ENCODE measurements at regions of chr17 and their contacts with region 1.

Region 1: DNA sequence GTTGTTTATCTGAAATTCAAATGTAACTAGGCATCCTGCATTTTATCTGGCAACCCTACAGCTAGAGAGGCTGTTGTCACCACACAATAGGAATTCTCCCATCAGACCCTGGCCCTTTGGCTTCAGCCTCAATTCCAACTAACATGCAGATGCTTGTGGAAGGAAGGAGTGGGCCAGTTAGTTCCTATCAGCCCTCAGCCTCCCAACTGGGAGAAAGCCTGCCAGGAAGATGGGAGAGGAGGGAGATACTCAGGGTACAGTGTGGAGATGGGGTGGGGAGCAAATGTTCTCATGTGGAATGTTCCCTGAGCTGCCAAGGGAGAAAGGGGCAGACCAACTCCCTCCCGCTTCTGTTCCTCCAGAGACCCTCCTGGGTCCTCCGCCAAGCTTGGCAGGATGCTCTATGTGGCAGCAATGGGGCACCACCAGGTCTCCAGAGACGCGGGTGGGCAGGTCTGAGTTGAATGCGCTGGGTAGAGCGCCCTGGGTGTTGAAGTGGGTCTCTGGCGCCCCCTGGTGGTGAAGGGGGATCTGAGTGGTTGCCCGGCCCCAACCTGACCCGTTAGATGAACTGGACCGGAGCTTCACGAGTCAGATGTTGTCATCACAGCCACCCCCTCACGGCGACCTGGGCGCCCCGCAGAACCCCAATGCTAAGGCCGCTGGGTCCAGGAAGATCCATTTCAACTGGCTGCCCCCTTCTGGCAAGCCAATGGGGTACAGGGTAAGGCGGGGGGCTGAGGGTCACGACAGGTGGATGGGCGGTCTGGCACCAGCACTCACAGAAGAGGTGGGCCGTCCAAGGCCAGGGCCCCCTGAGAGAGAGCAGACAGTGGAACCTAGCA is 15.2 kb downstream of the GALK1 start:
- DNase-seq: peak; percentile 91
- ATAC-seq: peak; percentile 76
- H3K4me3 ChIP-seq: no peak overlapping the region
- H3K4me3 Mint-ChIP-seq: peak overlapping the region; percentile 35
- H3K27ac ChIP-seq: no peak overlapping the region
- H3K27ac Mint-ChIP-seq: peak overlapping the region; percentile 64
- H3K4me1 ChIP-seq: peaks cover 9 to 34% of the 10 kb centered on the region in 2 donors
- H3K4me1 Mint-ChIP-seq: peaks cover 21% of the 10 kb centered on the region
- H3K27me3 ChIP-seq: no peaks in the 10 kb centered on the region
- H3K27me3 Mint-ChIP-seq: peaks cover 4% of the 10 kb centered on the region
- CTCF ChIP-seq: peak; percentile 86

Region 2: GRCh38 chr17:75430159-75430974 is 319.4 kb before region 1 on chr17:
- CTCF ChIA-PET with region 1: interaction called, 17 read pairs
- POLR2A ChIA-PET with region 1: no interaction called
- intact Hi-C with region 1: loop called (anchors 1 kb)
- DNase-seq: no peak
- ATAC-seq: no peak
- H3K4me3 ChIP-seq: no peak overlapping the region
- H3K4me3 Mint-ChIP-seq: no peak overlapping the region
- H3K27ac ChIP-seq: no peak overlapping the region
- H3K27ac Mint-ChIP-seq: no peak overlapping the region
- H3K4me1 ChIP-seq: peaks cover 6 to 7% of the 10 kb centered on the region in 2 donors
- H3K4me1 Mint-ChIP-seq: peaks cover 11% of the 10 kb centered on the region
- H3K27me3 ChIP-seq: peaks cover 0 to 4% (median 0%) of the 10 kb centered on the region in 4 experiments
- H3K27me3 Mint-ChIP-seq: peaks cover 15% of the 10 kb centered on the region
- CTCF ChIP-seq: no peak

Region 3: GRCh38 chr17:75601057-75602051 is 148.4 kb before region 1 on chr17:
- CTCF ChIA-PET with region 1: interaction called, 53 read pairs
- POLR2A ChIA-PET with region 1: interaction called, 3 read pairs
- intact Hi-C with region 1: loop called (anchors 1 kb)
- DNase-seq: peak; percentile 68
- ATAC-seq: peak; percentile 77
- H3K4me3 ChIP-seq: no peak overlapping the region
- H3K4me3 Mint-ChIP-seq: no peak overlapping the region
- H3K27ac ChIP-seq: no peak overlapping the region
- H3K27ac Mint-ChIP-seq: no peak overlapping the region
- H3K4me1 ChIP-seq: no peaks in the 10 kb centered on the region
- H3K4me1 Mint-ChIP-seq: no peaks in the 10 kb centered on the region
- H3K27me3 ChIP-seq: no peaks in the 10 kb centered on the region
- H3K27me3 Mint-ChIP-seq: no peaks in the 10 kb centered on the region
- CTCF ChIP-seq: peak; percentile 76

Region 4: DNA sequence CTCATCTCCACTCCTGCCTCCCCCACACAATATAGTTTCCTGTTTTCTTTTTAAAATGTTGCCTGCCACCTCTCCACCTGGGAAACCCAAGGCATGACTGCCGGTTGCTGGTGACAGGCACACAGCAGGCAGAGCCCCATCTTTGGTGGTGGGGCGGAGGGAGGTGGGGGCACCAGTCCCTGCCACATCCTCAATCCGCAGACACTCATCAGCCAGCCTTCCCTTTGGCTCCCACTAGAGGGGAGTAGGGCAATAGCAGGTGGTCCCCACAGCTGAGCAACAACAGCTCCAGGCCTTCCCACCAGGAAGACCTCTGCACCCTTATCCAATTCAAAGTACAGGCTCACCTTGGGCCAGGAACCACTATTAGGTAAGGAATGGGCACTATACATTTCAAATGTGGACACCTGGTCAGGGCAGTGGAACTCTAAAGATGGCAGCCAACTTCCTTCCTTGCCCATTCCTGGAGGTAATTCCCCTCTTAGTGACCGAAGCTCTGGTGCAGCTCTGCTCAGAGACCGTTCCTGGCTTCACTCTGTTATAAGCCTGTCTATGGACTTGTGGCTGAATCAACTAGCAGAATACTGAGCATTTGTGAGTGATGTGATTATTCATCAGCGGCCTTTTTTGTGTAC is 96.7 kb before region 1 on chr17:
- CTCF ChIA-PET with region 1: interaction called, 12 read pairs
- POLR2A ChIA-PET with region 1: interaction called, 13 read pairs
- intact Hi-C with region 1: no loop called
- DNase-seq: peak; percentile 59
- ATAC-seq: peak; percentile 81
- H3K4me3 ChIP-seq: no peak overlapping the region
- H3K4me3 Mint-ChIP-seq: no peak overlapping the region
- H3K27ac ChIP-seq: no peak overlapping the region
- H3K27ac Mint-ChIP-seq: peak overlapping the region; percentile 20
- H3K4me1 ChIP-seq: peaks cover 6 to 8% of the 10 kb centered on the region in 2 donors
- H3K4me1 Mint-ChIP-seq: peaks cover 7% of the 10 kb centered on the region
- H3K27me3 ChIP-seq: no peaks in the 10 kb centered on the region
- H3K27me3 Mint-ChIP-seq: no peaks in the 10 kb centered on the region
- CTCF ChIP-seq: peak; percentile 73

Region 5: GRCh38 chr17:75720725-75721462 is 28.9 kb before region 1 on chr17 and contains the start of gene ITGB4:
- CTCF ChIA-PET with region 1: interaction called, 15 read pairs
- POLR2A ChIA-PET with region 1: no interaction called
- intact Hi-C with region 1: no loop called
- DNase-seq: peak; percentile 73
- ATAC-seq: peak; percentile 93
- H3K4me3 ChIP-seq: peak within 1 kb of the TSS in 4 of 5 experiments; percentile 28 to 60 (median 50)
- H3K4me3 Mint-ChIP-seq: peak within 1 kb of the TSS; percentile 83
- H3K27ac ChIP-seq: no peak within 1 kb of the TSS
- H3K27ac Mint-ChIP-seq: no peak within 1 kb of the TSS
- H3K4me1 ChIP-seq: peaks cover 5 to 11% of the 10 kb centered on the region in 2 donors
- H3K4me1 Mint-ChIP-seq: peaks cover 7% of the 10 kb centered on the region
- H3K27me3 ChIP-seq: peaks cover 0 to 30% (median 4%) of the 10 kb centered on the region in 4 experiments
- H3K27me3 Mint-ChIP-seq: peaks cover 14% of the 10 kb centered on the region
- CTCF ChIP-seq: no peak
- total RNA-seq, gene ITGB4: 0.81 and 1.1 TPM in 2 replicates

Region 6: GRCh38 chr17:75784473-75785015 is 34.8 kb after region 1 on chr17 and contains the start of gene UNK:
- CTCF ChIA-PET with region 1: interaction called, 41 read pairs
- POLR2A ChIA-PET with region 1: interaction called, 9 read pairs
- intact Hi-C with region 1: no loop called
- DNase-seq: peak; percentile 99
- ATAC-seq: peak; percentile 75
- H3K4me3 ChIP-seq: peak within 1 kb of the TSS; percentile 75 to 83 (median 81)
- H3K4me3 Mint-ChIP-seq: peak within 1 kb of the TSS; percentile 96
- H3K27ac ChIP-seq: peak within 1 kb of the TSS; percentile 100
- H3K27ac Mint-ChIP-seq: peak within 1 kb of the TSS; percentile 100
- H3K4me1 ChIP-seq: peaks cover 42 to 49% of the 10 kb centered on the region in 2 donors
- H3K4me1 Mint-ChIP-seq: peaks cover 53% of the 10 kb centered on the region
- H3K27me3 ChIP-seq: no peaks in the 10 kb centered on the region
- H3K27me3 Mint-ChIP-seq: no peaks in the 10 kb centered on the region
- CTCF ChIP-seq: no peak
- total RNA-seq, gene UNK: 70.3 and 82.3 TPM in 2 replicates

Region 7: DNA sequence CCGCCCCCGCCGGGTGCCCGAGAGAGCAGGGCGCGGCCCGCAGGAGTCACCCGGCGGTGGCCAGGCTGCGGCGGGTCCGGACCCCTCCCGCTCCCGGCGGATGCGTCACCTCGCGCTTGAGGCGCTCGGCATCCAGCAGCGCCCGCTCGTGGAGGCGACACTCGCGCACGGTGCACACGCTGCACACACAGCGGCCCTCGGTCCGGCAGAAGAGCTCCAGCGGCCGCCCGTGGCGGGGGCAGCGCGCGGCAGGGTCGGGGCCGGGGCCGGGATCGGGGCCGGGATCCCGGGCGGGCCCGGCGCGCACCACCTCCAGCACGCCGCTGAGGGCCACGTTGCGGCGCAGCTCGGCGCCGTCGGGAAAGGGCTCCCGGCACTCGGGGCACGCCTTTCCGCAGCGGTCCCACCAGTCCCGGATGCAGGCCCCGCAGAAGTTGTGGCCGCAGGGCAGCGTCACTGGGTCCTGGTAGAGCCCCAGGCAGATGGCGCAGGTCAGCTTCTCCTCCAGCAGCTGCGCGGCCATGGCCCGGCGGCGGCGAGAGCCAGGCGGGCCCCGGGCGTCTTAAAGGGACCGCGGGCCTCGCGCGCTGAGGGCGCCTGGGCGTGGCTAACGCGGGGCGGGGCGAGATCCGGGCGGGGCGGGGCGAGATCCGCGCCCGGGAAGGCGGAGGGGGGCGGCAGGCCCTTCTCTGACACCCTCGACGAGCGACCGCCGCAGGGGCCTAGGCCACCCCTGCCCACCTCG is 146.8 kb after region 1 on chr17 and contains the start of gene TRIM65:
- CTCF ChIA-PET with region 1: interaction called, 10 read pairs
- POLR2A ChIA-PET with region 1: no interaction called
- intact Hi-C with region 1: no loop called
- DNase-seq: peak; percentile 86
- ATAC-seq: peak; percentile 86
- H3K4me3 ChIP-seq: peak within 1 kb of the TSS; percentile 14 to 80 (median 76)
- H3K4me3 Mint-ChIP-seq: peak within 1 kb of the TSS; percentile 85
- H3K27ac ChIP-seq: peak within 1 kb of the TSS; percentile 34 to 49
- H3K27ac Mint-ChIP-seq: peak within 1 kb of the TSS; percentile 82
- H3K4me1 ChIP-seq: peaks cover 16 to 19% of the 10 kb centered on the region in 2 donors
- H3K4me1 Mint-ChIP-seq: peaks cover 26% of the 10 kb centered on the region
- H3K27me3 ChIP-seq: no peaks in the 10 kb centered on the region
- H3K27me3 Mint-ChIP-seq: no peaks in the 10 kb centered on the region
- CTCF ChIP-seq: peak; percentile 41
- total RNA-seq, gene TRIM65: 39.2 and 40.7 TPM in 2 replicates

Measured in B cell (primary cell).